ENCODE measurements at regions of chr2 and their contacts with region 1.

Region 1: GRCh38 chr2:20033341-20033740 is 18.1 kb downstream of the LAPTM4A start:
- DNase-seq: no peak
- ATAC-seq: peak; percentile 30 to 63 (median 54)
- H3K4me3 ChIP-seq: no peak overlapping the region
- H3K27ac ChIP-seq: peak overlapping the region in 8 of 12 donors; percentile 27 to 63 (median 49)
- H3K4me1 ChIP-seq: peaks cover 0 to 45% (median 23%) of the 10 kb centered on the region in 12 donors
- H3K27me3 ChIP-seq: no peaks in the 10 kb centered on the region
- CTCF ChIP-seq: no peak
- POLR2A ChIP-seq: no peak

Region 2: GRCh38 chr2:19893520-19894133 is 139.7 kb before region 1 on chr2:
- intact Hi-C with region 1: no loop called
- DNase-seq: no peak
- ATAC-seq: no peak
- H3K4me3 ChIP-seq: no peak overlapping the region
- H3K27ac ChIP-seq: no peak overlapping the region
- H3K4me1 ChIP-seq: peaks cover 0 to 56% (median 36%) of the 10 kb centered on the region in 12 donors
- H3K27me3 ChIP-seq: no peaks in the 10 kb centered on the region
- CTCF ChIP-seq: no peak
- POLR2A ChIP-seq: no peak

Region 3: GRCh38 chr2:19955544-19956422 is 77.6 kb before region 1 on chr2:
- intact Hi-C with region 1: no loop called
- DNase-seq: peak; percentile 48 to 57 (median 53)
- ATAC-seq: peak in 3 of 4 donors; percentile 83 to 87 (median 86)
- H3K4me3 ChIP-seq: no peak overlapping the region
- H3K27ac ChIP-seq: no peak overlapping the region
- H3K4me1 ChIP-seq: peaks cover 0 to 3% (median 0%) of the 10 kb centered on the region in 12 donors
- H3K27me3 ChIP-seq: no peaks in the 10 kb centered on the region
- CTCF ChIP-seq: peak; percentile 62 to 85 (median 76)
- POLR2A ChIP-seq: no peak

Region 4: GRCh38 chr2:20071397-20072383 is 38.3 kb after region 1 on chr2:
- intact Hi-C with region 1: loop called in 1 of 10 experiments (anchors 5 kb)
- DNase-seq: peak; percentile 67 to 90 (median 80)
- ATAC-seq: peak; percentile 80 to 92 (median 88)
- H3K4me3 ChIP-seq: peak overlapping the region in 4 of 12 donors; percentile 14 to 29 (median 18)
- H3K27ac ChIP-seq: peak overlapping the region; percentile 69 to 92 (median 84)
- H3K4me1 ChIP-seq: peaks cover 0 to 51% (median 26%) of the 10 kb centered on the region in 12 donors
- H3K27me3 ChIP-seq: no peaks in the 10 kb centered on the region
- CTCF ChIP-seq: no peak
- POLR2A ChIP-seq: no peak

Measured in heart left ventricle (tissue), 16 donors.